ENCODE measurements at regions of chr4 and their contacts with region 1.

Region 1: GRCh38 chr4:103019308-103020124 is at the start of gene SLC9B1:
- DNase-seq: peak; percentile 86 to 96 (median 94)
- ATAC-seq: peak; percentile 92
- H3K4me3 ChIP-seq: peak within 1 kb of the TSS; percentile 70 to 75
- H3K4me3 Mint-ChIP-seq: peak within 1 kb of the TSS; percentile 87
- H3K27ac ChIP-seq: peak within 1 kb of the TSS; percentile 86 to 87
- H3K27ac Mint-ChIP-seq: peak within 1 kb of the TSS; percentile 97
- H3K4me1 ChIP-seq: peaks cover 17% of the 10 kb centered on the region
- H3K4me1 Mint-ChIP-seq: peaks cover 20% of the 10 kb centered on the region
- H3K27me3 ChIP-seq: no peaks in the 10 kb centered on the region
- H3K27me3 Mint-ChIP-seq: no peaks in the 10 kb centered on the region
- CTCF ChIP-seq: no peak
- total RNA-seq, gene SLC9B1: 1.7 to 4.0 TPM

Region 2: GRCh38 chr4:101169044-101170014 is 1850.2 kb before region 1 on chr4:
- CTCF ChIA-PET with region 1: no interaction called
- POLR2A ChIA-PET with region 1: no interaction called
- intact Hi-C with region 1: loop called in 1 of 2 experiments (anchors 10 kb)
- DNase-seq: peak; percentile 6 to 81 (median 56)
- ATAC-seq: peak; percentile 92
- H3K4me3 ChIP-seq: no peak overlapping the region
- H3K4me3 Mint-ChIP-seq: no peak overlapping the region
- H3K27ac ChIP-seq: no peak overlapping the region
- H3K27ac Mint-ChIP-seq: no peak overlapping the region
- H3K4me1 ChIP-seq: no peaks in the 10 kb centered on the region
- H3K4me1 Mint-ChIP-seq: peaks cover 2% of the 10 kb centered on the region
- H3K27me3 ChIP-seq: no peaks in the 10 kb centered on the region
- H3K27me3 Mint-ChIP-seq: no peaks in the 10 kb centered on the region
- CTCF ChIP-seq: peak; percentile 66

Region 3: DNA sequence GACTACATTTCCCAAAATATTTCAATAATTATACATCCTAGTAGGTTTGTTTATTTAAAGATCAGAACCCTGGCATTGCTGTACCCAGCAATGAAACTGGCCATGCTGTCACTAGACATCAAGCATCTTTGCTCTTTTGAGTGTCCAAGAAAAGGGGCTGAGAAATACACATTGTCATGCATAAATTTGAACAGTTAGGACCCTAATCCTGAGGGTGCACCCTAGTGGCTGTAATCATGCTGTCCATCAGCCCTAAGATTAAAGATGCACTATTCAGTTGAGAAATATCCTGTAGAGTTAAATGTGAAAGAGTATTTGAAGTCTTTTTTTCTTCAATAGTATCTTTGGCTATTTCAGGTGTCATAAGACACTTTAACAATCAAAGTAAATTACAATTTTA is 409.5 kb before region 1 on chr4:
- CTCF ChIA-PET with region 1: no interaction called
- POLR2A ChIA-PET with region 1: no interaction called
- intact Hi-C with region 1: loop called in 1 of 2 experiments (anchors 5 kb)
- DNase-seq: peak in 1 of 9 experiments; percentile 41
- ATAC-seq: no peak
- H3K4me3 ChIP-seq: no peak overlapping the region
- H3K4me3 Mint-ChIP-seq: no peak overlapping the region
- H3K27ac ChIP-seq: peak overlapping the region in 1 of 2 experiments; percentile 90
- H3K27ac Mint-ChIP-seq: peak overlapping the region; percentile 39
- H3K4me1 ChIP-seq: peaks cover 67% of the 10 kb centered on the region
- H3K4me1 Mint-ChIP-seq: peaks cover 78% of the 10 kb centered on the region
- H3K27me3 ChIP-seq: no peaks in the 10 kb centered on the region
- H3K27me3 Mint-ChIP-seq: no peaks in the 10 kb centered on the region
- CTCF ChIP-seq: no peak

Region 4: DNA sequence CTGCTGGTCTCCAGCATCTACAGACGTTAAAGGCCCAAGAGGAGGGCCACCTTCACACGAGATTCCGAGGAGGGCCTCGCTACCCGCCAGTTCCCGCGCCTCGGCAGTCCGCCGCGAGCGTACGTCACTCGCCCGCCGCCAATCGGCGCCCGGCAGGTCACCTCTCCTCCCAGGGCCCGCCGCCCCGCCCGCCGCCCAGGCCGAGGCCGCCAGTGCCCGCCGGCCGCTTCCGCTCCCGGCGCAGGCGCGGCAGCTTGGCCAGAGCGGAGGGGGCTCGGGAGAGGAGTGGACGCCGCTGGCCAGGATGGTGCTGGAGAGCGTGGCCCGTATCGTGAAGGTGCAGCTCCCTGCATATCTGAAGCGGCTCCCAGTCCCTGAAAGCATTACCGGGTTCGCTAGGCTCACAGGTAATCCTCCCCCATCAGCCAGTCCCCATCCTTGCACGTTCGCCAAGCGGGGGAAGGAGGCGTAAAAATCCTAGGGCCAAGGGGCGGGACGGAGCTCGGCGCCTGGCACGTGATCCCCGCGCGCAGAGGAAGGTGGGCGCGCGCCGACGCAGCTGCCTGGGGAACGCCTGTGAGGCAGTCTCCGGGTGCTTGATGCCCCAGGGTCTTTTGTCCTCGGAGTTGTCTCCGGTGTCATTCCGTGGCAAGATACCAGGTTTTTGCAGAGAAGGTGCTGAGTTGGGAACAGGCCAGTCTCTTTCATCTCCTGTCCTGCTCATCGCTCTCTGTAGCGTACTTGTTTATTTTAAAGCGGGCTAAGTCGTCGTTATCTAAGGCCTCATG is 150.5 kb before region 1 on chr4 and contains the start of gene CISD2:
- CTCF ChIA-PET with region 1: no interaction called
- POLR2A ChIA-PET with region 1: interaction called, 5 read pairs
- intact Hi-C with region 1: loop called (anchors 2 kb)
- DNase-seq: peak; percentile 83 to 97 (median 91)
- ATAC-seq: peak; percentile 81
- H3K4me3 ChIP-seq: peak within 1 kb of the TSS; percentile 74 to 77
- H3K4me3 Mint-ChIP-seq: peak within 1 kb of the TSS; percentile 89
- H3K27ac ChIP-seq: peak within 1 kb of the TSS; percentile 89 to 94
- H3K27ac Mint-ChIP-seq: peak within 1 kb of the TSS; percentile 99
- H3K4me1 ChIP-seq: peaks cover 37% of the 10 kb centered on the region
- H3K4me1 Mint-ChIP-seq: peaks cover 66% of the 10 kb centered on the region
- H3K27me3 ChIP-seq: no peaks in the 10 kb centered on the region
- H3K27me3 Mint-ChIP-seq: no peaks in the 10 kb centered on the region
- CTCF ChIP-seq: no peak
- total RNA-seq, gene CISD2: 14.3 to 14.4 TPM

Region 5: GRCh38 chr4:103075901-103076739 is 56.6 kb after region 1 on chr4:
- CTCF ChIA-PET with region 1: no interaction called
- POLR2A ChIA-PET with region 1: no interaction called
- intact Hi-C with region 1: loop called (anchors 1 to 2 kb)
- DNase-seq: peak; percentile 39 to 84 (median 64)
- ATAC-seq: peak; percentile 79
- H3K4me3 ChIP-seq: peak overlapping the region; percentile 80
- H3K4me3 Mint-ChIP-seq: peak overlapping the region; percentile 94
- H3K27ac ChIP-seq: peak overlapping the region; percentile 89 to 95
- H3K27ac Mint-ChIP-seq: peak overlapping the region; percentile 99
- H3K4me1 ChIP-seq: peaks cover 25% of the 10 kb centered on the region
- H3K4me1 Mint-ChIP-seq: peaks cover 49% of the 10 kb centered on the region
- H3K27me3 ChIP-seq: no peaks in the 10 kb centered on the region
- H3K27me3 Mint-ChIP-seq: no peaks in the 10 kb centered on the region
- CTCF ChIP-seq: no peak

Measured in CD8-positive, alpha-beta T cell (primary cell).